ENCODE measurements at regions of chr12 and their contacts with region 1.

Region 1: GRCh38 chr12:116434155-116435011 is 124.8 kb upstream of the MAP1LC3B2 start:
- DNase-seq: no peak
- ATAC-seq: no peak
- H3K4me3 ChIP-seq: no peak overlapping the region
- H3K4me3 Mint-ChIP-seq: no peak overlapping the region
- H3K27ac ChIP-seq: no peak overlapping the region
- H3K27ac Mint-ChIP-seq: no peak overlapping the region
- H3K4me1 ChIP-seq: no peaks in the 10 kb centered on the region
- H3K4me1 Mint-ChIP-seq: peaks cover 4 to 6% (median 4%) of the 10 kb centered on the region in 3 donors
- H3K27me3 ChIP-seq: peaks cover 0 to 7% of the 10 kb centered on the region in 2 experiments
- H3K27me3 Mint-ChIP-seq: peaks cover 0 to 1% of the 10 kb centered on the region in 2 donors

Region 2: DNA sequence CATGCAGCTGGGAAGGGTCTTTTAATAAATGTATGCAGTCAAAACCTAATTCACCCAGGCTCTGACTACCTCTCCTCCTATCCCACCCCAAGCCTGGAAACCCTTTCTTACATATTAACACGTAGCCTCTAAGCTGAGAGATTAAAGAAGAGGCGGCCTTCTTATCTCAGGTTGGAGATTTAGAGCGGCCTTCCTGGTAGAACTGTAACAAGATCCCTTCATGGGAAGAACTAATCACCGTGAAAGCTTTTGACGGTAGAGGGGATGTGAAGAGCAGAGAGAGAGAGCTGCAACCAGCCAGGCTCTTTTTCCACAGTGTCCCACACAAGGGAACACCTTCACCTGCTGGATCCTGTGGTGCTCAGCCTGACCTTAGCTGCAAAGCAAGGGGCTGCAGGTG is 524.3 kb before region 1 on chr12:
- CTCF ChIA-PET with region 1: no interaction called
- POLR2A ChIA-PET with region 1: interaction called in 1 of 2 experiments, 11 read pairs
- DNase-seq: no peak
- ATAC-seq: no peak
- H3K4me3 ChIP-seq: no peak overlapping the region
- H3K4me3 Mint-ChIP-seq: no peak overlapping the region
- H3K27ac ChIP-seq: no peak overlapping the region
- H3K27ac Mint-ChIP-seq: no peak overlapping the region
- H3K4me1 ChIP-seq: no peaks in the 10 kb centered on the region
- H3K4me1 Mint-ChIP-seq: no peaks in the 10 kb centered on the region
- H3K27me3 ChIP-seq: peaks cover 0 to 6% of the 10 kb centered on the region in 2 experiments
- H3K27me3 Mint-ChIP-seq: peaks cover 26 to 31% of the 10 kb centered on the region in 2 donors

Region 3: GRCh38 chr12:116266168-116266601 is 168.2 kb before region 1 on chr12:
- CTCF ChIA-PET with region 1: no interaction called
- POLR2A ChIA-PET with region 1: interaction called in 1 of 2 experiments, 13 read pairs
- DNase-seq: no peak
- ATAC-seq: no peak
- H3K4me3 ChIP-seq: no peak overlapping the region
- H3K4me3 Mint-ChIP-seq: no peak overlapping the region
- H3K27ac ChIP-seq: no peak overlapping the region
- H3K27ac Mint-ChIP-seq: no peak overlapping the region
- H3K4me1 ChIP-seq: peaks cover 18 to 45% of the 10 kb centered on the region in 2 experiments
- H3K4me1 Mint-ChIP-seq: peaks cover 33 to 40% (median 39%) of the 10 kb centered on the region in 3 donors
- H3K27me3 ChIP-seq: no peaks in the 10 kb centered on the region
- H3K27me3 Mint-ChIP-seq: no peaks in the 10 kb centered on the region

Region 4: GRCh38 chr12:116423094-116423493 is 11.3 kb before region 1 on chr12:
- CTCF ChIA-PET with region 1: no interaction called
- POLR2A ChIA-PET with region 1: interaction called in 1 of 2 experiments, 10 read pairs
- DNase-seq: no peak
- ATAC-seq: no peak
- H3K4me3 ChIP-seq: no peak overlapping the region
- H3K4me3 Mint-ChIP-seq: no peak overlapping the region
- H3K27ac ChIP-seq: no peak overlapping the region
- H3K27ac Mint-ChIP-seq: no peak overlapping the region
- H3K4me1 ChIP-seq: no peaks in the 10 kb centered on the region
- H3K4me1 Mint-ChIP-seq: no peaks in the 10 kb centered on the region
- H3K27me3 ChIP-seq: no peaks in the 10 kb centered on the region
- H3K27me3 Mint-ChIP-seq: no peaks in the 10 kb centered on the region

Region 5: GRCh38 chr12:116448164-116448739 is 13.9 kb after region 1 on chr12:
- CTCF ChIA-PET with region 1: no interaction called
- POLR2A ChIA-PET with region 1: no interaction called
- DNase-seq: no peak
- ATAC-seq: no peak
- H3K4me3 ChIP-seq: no peak overlapping the region
- H3K4me3 Mint-ChIP-seq: no peak overlapping the region
- H3K27ac ChIP-seq: no peak overlapping the region
- H3K27ac Mint-ChIP-seq: no peak overlapping the region
- H3K4me1 ChIP-seq: peaks cover 0 to 3% of the 10 kb centered on the region in 2 experiments
- H3K4me1 Mint-ChIP-seq: peaks cover 2 to 10% (median 2%) of the 10 kb centered on the region in 3 donors
- H3K27me3 ChIP-seq: no peaks in the 10 kb centered on the region
- H3K27me3 Mint-ChIP-seq: no peaks in the 10 kb centered on the region